H1 (cell line): ENCODE measurements at regions of chr11 and their contacts with region 1.

Region 1: DNA sequence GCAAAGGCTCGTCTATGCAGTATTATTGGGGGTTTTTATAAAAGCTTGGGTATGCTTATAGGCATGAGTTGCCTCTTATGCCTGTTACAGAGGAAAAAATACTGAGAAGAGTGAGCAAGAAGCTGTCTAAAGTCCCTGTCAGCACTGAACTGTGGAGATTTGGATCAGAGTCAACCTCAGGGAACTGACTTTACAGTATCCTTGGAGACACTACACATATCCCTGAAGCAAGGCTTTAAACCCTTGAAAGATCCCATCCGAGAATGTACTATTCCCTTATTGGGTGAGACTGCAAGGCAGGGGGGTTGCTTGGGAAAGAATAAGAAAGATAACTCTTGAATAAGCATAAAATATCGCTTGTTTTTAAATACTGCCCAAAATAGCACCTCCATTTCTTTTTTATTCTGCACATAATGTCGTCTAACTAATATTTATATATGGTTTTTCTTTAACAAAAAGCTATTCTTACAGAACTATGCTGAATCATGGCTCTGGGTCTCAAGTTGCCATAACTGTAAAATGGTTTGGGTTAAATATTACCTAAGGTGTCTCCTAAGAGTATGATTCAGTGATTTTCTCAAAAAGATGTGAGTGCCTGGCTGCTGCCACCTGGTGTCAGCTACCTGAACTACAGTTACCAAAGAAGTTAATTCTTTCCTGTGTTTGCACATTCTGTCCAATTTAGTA is 1062.8 kb downstream of the DLG2 start:
- DNase-seq: no peak
- H3K4me3 ChIP-seq: no peak overlapping the region
- H3K27ac ChIP-seq: no peak overlapping the region
- H3K4me1 ChIP-seq: no peaks in the 10 kb centered on the region
- H3K27me3 ChIP-seq: no peaks in the 10 kb centered on the region
- CTCF ChIP-seq: peak in 2 of 3 experiments; percentile 62 to 73; a peak in 3 of 4 replicates
- EP300 ChIP-seq: no peak
- POLR2A ChIP-seq: peak in 1 of 2 experiments; percentile 51; a peak in 1 of 3 replicates
- RAD21 ChIP-seq: peak; percentile 58 to 68

Region 2: DNA sequence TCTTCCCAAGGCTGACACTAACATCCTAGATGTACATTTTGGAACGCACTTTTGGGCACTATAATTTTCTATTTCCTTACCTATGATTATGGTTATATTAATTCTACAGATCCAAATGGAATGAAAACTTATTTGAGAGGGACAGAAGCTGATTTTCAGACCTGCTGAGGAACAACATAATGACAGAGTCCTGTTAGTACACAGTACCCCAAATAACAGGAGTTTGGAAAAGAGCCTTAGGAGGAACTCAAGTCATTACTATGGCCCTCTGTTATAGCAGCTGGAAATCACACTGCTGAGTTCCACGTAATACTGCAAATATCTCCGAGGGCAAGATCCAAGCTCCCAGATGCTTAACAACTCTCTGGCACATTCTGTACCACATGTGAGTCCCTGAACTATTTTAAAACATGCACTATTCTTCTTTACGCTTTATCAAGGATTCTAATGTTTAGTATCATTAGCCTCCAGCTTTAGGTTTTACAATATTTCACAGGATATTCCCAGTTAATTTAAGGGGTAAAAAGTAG is 250.4 kb before region 1 on chr11:
- CTCF ChIA-PET with region 1: no interaction called
- POLR2A ChIA-PET with region 1: no interaction called
- DNase-seq: no peak
- H3K4me3 ChIP-seq: no peak overlapping the region
- H3K27ac ChIP-seq: no peak overlapping the region
- H3K4me1 ChIP-seq: peaks cover 0 to 5% (median 2%) of the 10 kb centered on the region in 4 experiments; a peak in 2 of 7 replicates
- H3K27me3 ChIP-seq: no peaks in the 10 kb centered on the region
- CTCF ChIP-seq: no peak
- EP300 ChIP-seq: no peak
- POLR2A ChIP-seq: no peak
- RAD21 ChIP-seq: no peak

Region 3: GRCh38 chr11:84390441-84391078 is 173.8 kb before region 1 on chr11:
- CTCF ChIA-PET with region 1: interaction called, 21 read pairs
- POLR2A ChIA-PET with region 1: interaction called, 3 read pairs
- DNase-seq: no peak
- H3K4me3 ChIP-seq: no peak overlapping the region
- H3K27ac ChIP-seq: no peak overlapping the region
- H3K4me1 ChIP-seq: peaks cover 0 to 3% (median 0%) of the 10 kb centered on the region in 4 experiments; a peak in 1 of 7 replicates
- H3K27me3 ChIP-seq: no peaks in the 10 kb centered on the region
- CTCF ChIP-seq: peak in 2 of 3 experiments; percentile 64 to 67; a peak in 3 of 4 replicates
- EP300 ChIP-seq: no peak
- POLR2A ChIP-seq: no peak
- RAD21 ChIP-seq: peak; percentile 84 to 85

Region 4: GRCh38 chr11:84524422-84525051 is 39.8 kb before region 1 on chr11:
- CTCF ChIA-PET with region 1: interaction called, 12 read pairs
- POLR2A ChIA-PET with region 1: no interaction called
- DNase-seq: no peak
- H3K4me3 ChIP-seq: no peak overlapping the region
- H3K27ac ChIP-seq: no peak overlapping the region
- H3K4me1 ChIP-seq: peaks cover 0 to 2% (median 0%) of the 10 kb centered on the region in 4 experiments; a peak in 2 of 7 replicates
- H3K27me3 ChIP-seq: no peaks in the 10 kb centered on the region
- CTCF ChIP-seq: peak in 2 of 3 experiments; percentile 37 to 42; a peak in 2 of 4 replicates
- EP300 ChIP-seq: no peak
- POLR2A ChIP-seq: no peak
- RAD21 ChIP-seq: peak; percentile 64 to 71

Region 5: DNA sequence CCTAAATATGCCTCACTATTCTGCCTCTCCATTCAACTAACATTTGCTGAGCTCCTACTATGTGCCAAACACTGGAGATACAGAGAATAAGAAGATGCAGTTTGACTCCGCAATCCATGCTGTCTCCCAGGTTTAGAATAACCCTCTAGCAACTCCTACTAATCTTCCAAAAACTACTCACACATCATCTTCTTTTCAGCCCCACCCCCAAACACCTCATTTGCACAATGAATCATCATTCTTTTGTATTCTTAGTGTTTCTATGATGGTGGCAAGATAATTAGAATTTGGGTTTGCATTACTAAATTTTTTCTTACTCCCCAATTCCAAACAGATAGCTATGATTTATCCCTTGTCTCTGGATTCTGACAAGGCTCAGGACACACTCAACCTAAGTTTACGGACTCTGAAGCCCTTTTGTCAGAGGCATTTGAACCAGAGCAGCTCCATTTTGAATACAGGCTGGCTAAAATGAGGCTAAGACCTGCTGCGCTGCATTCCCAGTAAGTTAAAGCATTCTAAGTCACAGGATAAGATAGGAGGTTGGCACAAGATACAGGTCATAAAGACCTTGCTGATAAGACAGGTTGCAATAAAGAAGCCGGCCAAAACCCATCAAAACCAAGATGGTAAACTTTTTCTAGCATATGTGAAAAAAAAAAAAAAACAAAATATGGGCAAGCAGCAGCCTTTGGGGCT is 24.0 kb after region 1 on chr11:
- CTCF ChIA-PET with region 1: interaction called, 10 read pairs
- POLR2A ChIA-PET with region 1: no interaction called
- DNase-seq: no peak
- H3K4me3 ChIP-seq: no peak overlapping the region
- H3K27ac ChIP-seq: no peak overlapping the region
- H3K4me1 ChIP-seq: peaks cover 0 to 3% (median 0%) of the 10 kb centered on the region in 4 experiments; a peak in 1 of 7 replicates
- H3K27me3 ChIP-seq: no peaks in the 10 kb centered on the region
- CTCF ChIP-seq: no peak
- EP300 ChIP-seq: no peak
- POLR2A ChIP-seq: no peak
- RAD21 ChIP-seq: no peak

Region 6: GRCh38 chr11:84642501-84642900 is 78.2 kb after region 1 on chr11:
- CTCF ChIA-PET with region 1: interaction called, 10 read pairs
- POLR2A ChIA-PET with region 1: no interaction called
- DNase-seq: no peak
- H3K4me3 ChIP-seq: no peak overlapping the region
- H3K27ac ChIP-seq: no peak overlapping the region
- H3K4me1 ChIP-seq: peaks cover 0 to 5% (median 2%) of the 10 kb centered on the region in 4 experiments; a peak in 2 of 7 replicates
- H3K27me3 ChIP-seq: no peaks in the 10 kb centered on the region
- CTCF ChIP-seq: peak in 2 of 3 experiments; percentile 23 to 32; a peak in 3 of 4 replicates
- EP300 ChIP-seq: no peak
- POLR2A ChIP-seq: no peak
- RAD21 ChIP-seq: peak; percentile 55 to 66